ENCODE measurements at regions of chr11 and their contacts with region 1.

Region 1: DNA sequence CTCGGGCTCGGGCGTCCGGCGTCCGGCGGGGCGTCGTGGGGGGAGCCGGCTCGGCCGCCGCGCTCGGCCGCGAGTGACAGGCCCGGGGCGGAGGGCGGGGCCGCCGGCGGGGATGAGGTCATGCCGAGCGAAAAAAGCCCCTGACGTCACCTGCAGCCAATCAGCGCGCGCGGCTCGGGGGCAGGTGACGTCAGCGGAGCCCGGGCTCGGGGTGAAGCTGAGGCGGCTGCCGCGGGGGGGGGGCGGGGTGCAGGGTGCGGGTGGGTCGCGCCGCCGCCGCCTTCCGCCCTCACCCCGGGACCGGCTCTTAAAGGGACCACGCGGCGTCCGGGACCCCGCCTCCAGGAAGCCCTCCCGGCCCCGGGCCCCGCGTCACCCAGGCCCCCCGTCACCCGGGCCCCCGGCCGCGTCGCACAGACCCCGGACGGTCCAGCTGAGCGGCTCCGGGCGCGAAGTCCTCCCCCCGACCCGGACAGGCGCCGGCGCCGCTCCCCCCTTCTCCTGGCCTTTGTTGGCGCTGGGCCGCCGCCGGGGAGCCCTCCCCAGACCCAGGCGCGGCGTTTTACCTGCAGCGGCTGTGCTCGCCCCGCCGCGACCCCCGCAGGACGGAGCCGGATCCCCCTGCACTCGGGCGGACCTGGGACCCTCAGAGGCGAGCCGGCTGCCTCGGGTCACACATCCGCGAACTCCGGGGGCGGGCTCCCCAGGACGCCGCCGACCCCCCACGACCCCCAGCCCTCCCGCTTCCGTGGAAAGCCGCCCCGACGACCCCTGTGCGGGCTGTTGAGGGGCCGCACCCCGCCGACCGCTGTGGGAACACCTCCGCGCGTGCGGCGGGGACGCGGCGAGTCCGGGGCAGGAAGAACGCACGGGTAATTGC is at the start of gene DUSP8:
- DNase-seq: peak; percentile 48
- H3K4me3 ChIP-seq: peak within 1 kb of the TSS; percentile 61
- H3K27ac ChIP-seq: no peak within 1 kb of the TSS
- H3K27me3 ChIP-seq: peaks cover 25% of the 10 kb centered on the region
- CTCF ChIP-seq: no peak
- polyA plus RNA-seq, gene DUSP8: 1.5 and 2.1 TPM in 2 replicates

Region 2: DNA sequence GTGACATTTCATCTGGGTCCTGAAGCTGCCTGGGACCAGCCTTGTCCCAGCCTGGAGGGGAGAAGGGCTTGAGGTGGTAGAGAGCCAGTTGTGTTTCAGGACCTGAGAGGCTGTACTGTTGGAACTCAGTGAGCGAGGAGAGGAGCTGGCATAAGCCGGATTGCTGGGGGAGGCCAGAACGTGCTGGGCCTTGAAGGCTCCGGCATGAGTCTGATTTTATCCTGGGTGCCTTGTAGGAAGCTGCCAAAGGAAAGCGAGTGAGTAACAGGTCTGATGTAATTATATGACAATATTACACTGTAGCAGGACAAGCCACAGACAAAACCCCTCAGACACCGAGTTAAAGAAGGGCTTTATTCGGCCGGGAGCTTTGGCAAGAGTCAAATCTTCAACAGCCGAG is 629.6 kb before region 1 on chr11:
- CTCF ChIA-PET with region 1: no interaction called
- POLR2A ChIA-PET with region 1: no interaction called
- DNase-seq: no peak
- H3K4me3 ChIP-seq: no peak overlapping the region
- H3K27ac ChIP-seq: peak overlapping the region; percentile 61
- H3K27me3 ChIP-seq: no peaks in the 10 kb centered on the region
- CTCF ChIP-seq: no peak

Region 3: DNA sequence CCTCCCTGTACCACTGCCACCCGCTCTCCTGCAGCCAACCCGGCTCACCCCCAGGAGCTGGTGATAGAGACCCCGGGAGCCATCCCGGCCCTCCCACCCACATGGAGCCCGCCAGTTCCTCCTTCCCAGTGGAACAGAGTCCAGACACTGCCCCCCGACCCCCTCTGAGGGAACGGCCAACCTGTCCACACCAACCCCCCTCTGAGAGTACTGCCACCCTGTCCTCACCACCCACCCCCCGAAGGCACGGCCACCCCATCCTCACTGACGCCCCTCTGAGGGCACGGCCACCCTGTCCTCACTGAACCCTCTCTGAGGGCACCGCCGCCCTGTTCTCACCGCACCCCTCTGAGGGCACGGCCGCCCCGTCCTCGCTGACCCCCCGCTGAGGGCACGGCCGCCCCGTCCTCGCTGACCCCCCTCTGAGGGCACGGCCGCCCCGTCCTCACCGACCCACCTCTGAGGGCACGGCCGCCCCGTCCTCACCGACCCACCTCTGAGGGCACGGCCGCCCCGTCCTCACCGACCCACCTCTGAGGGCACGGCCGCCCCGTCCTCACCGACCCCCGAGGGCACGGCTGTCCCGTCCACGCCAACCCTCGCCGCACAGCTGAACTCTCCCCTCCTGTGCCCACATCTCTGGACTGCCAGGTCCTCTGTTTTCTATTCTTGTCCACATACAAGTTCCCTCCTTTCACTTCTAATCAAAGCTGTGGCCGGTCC is 281.0 kb before region 1 on chr11:
- CTCF ChIA-PET with region 1: no interaction called
- POLR2A ChIA-PET with region 1: no interaction called
- DNase-seq: no peak
- H3K4me3 ChIP-seq: no peak overlapping the region
- H3K27ac ChIP-seq: no peak overlapping the region
- H3K27me3 ChIP-seq: no peaks in the 10 kb centered on the region
- CTCF ChIP-seq: no peak

Region 4: GRCh38 chr11:1589996-1590395 is 17.6 kb after region 1 on chr11:
- CTCF ChIA-PET with region 1: interaction called, 16 read pairs
- POLR2A ChIA-PET with region 1: no interaction called
- DNase-seq: no peak
- H3K4me3 ChIP-seq: no peak overlapping the region
- H3K27ac ChIP-seq: no peak overlapping the region
- H3K27me3 ChIP-seq: peaks cover 28% of the 10 kb centered on the region
- CTCF ChIP-seq: no peak

Measured in AG04450 (cell line).